PC-3 (cell line): ENCODE measurements at regions of chr17 and their contacts with region 1.

Region 1: GRCh38 chr17:49677933-49678847 is at the start of gene SPOP:
- DNase-seq: peak; percentile 100
- ATAC-seq: peak; percentile 91
- H3K4me3 ChIP-seq: peak within 1 kb of the TSS; percentile 90
- H3K27ac ChIP-seq: peak within 1 kb of the TSS; percentile 71
- H3K4me1 ChIP-seq: peaks cover 24% of the 10 kb centered on the region
- H3K27me3 ChIP-seq: no peaks in the 10 kb centered on the region
- CTCF ChIP-seq: no peak
- total RNA-seq, gene SPOP: 52.9 and 54.7 TPM in 2 replicates

Region 2: GRCh38 chr17:49414622-49415350 is 263.4 kb before region 1 on chr17 and contains the start of gene PHB1:
- CTCF ChIA-PET with region 1: no interaction called
- POLR2A ChIA-PET with region 1: interaction called, 13 read pairs
- intact Hi-C with region 1: no loop called
- DNase-seq: peak; percentile 100
- ATAC-seq: peak; percentile 99
- H3K4me3 ChIP-seq: peak within 1 kb of the TSS; percentile 89
- H3K27ac ChIP-seq: peak within 1 kb of the TSS; percentile 2; the same call in 1 of the 2 replicates
- H3K4me1 ChIP-seq: peaks cover 14% of the 10 kb centered on the region
- H3K27me3 ChIP-seq: no peaks in the 10 kb centered on the region
- CTCF ChIP-seq: no peak
- total RNA-seq, gene PHB1: 585 and 641 TPM in 2 replicates

Region 3: GRCh38 chr17:49548506-49549310 is 129.5 kb before region 1 on chr17:
- CTCF ChIA-PET with region 1: no interaction called
- POLR2A ChIA-PET with region 1: no interaction called
- intact Hi-C with region 1: no loop called
- DNase-seq: peak; percentile 62
- ATAC-seq: peak; percentile 52
- H3K4me3 ChIP-seq: no peak overlapping the region
- H3K27ac ChIP-seq: no peak overlapping the region
- H3K4me1 ChIP-seq: no peaks in the 10 kb centered on the region
- H3K27me3 ChIP-seq: no peaks in the 10 kb centered on the region
- CTCF ChIP-seq: peak; percentile 91

Region 4: DNA sequence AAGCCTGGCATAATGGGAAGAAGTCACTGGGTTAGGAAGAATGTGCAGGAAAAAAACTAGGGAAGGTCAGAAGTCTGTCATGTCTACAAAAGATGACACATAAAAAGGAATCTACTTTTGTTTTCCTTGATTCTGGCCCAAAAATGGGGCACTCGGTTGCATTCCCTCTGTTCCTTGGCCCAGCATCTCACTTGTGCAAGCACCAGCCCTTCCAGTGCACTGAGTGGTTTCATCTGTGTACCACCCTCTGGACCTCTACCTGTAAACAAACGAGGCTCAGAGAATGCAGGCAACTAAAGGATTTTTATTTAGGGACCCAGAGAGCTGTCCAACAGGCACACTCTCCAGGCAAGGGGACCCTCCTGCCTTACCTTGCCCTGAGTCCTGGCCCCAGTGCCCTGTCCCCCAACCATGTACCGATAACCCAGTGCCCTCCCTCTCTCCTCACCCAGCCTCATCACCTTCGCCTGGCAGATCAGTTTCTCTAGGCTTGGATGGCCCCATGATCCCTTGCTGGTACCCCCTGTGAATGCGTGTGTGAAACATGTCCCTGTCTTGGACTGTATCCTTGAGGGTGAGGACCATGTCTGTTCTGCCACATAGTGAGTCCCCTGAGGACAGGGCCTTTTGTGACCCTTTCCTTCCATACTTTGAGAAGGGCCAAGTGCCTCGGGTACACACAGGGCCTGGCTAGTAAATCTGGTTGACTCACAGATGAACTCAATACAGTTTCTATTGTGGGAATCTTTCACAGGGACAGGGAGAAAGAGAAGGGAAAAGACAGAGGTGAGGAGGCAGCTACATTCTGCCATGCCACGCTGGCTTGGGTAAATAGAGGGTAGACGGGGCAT is 89.2 kb before region 1 on chr17:
- CTCF ChIA-PET with region 1: no interaction called
- POLR2A ChIA-PET with region 1: interaction called, 21 read pairs
- intact Hi-C with region 1: no loop called
- DNase-seq: peak; percentile 51
- ATAC-seq: peak; percentile 65
- H3K4me3 ChIP-seq: no peak overlapping the region
- H3K27ac ChIP-seq: peak overlapping the region; percentile 18
- H3K4me1 ChIP-seq: peaks cover 14% of the 10 kb centered on the region
- H3K27me3 ChIP-seq: no peaks in the 10 kb centered on the region
- CTCF ChIP-seq: no peak

Region 5: GRCh38 chr17:49646391-49647255 is 31.6 kb before region 1 on chr17:
- CTCF ChIA-PET with region 1: no interaction called
- POLR2A ChIA-PET with region 1: interaction called, 10 read pairs
- intact Hi-C with region 1: no loop called
- DNase-seq: peak; percentile 88
- ATAC-seq: peak; percentile 99
- H3K4me3 ChIP-seq: peak overlapping the region; percentile 54
- H3K27ac ChIP-seq: peak overlapping the region; percentile 62
- H3K4me1 ChIP-seq: peaks cover 19% of the 10 kb centered on the region
- H3K27me3 ChIP-seq: no peaks in the 10 kb centered on the region
- CTCF ChIP-seq: no peak

Region 6: DNA sequence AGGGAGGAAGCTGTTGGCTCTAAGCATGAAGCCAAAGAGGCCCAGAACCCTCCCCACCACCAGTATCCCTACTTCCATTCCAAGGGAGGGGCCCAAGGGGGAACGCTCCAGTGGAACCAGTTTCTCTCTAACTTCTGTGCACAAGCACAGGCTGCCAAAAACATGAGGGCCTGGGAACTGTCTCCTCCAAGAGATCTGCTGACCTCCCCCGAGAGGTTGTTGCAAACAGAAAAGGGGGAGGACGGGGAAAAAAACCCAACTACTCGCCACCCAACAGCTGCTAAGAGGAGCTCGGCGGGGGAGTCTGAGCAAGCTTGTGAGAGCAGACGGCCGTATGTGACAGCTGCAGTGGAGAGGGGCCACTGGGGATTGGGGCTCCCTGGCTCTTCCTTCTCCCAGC is 45.2 kb after region 1 on chr17:
- CTCF ChIA-PET with region 1: no interaction called
- POLR2A ChIA-PET with region 1: no interaction called
- intact Hi-C with region 1: no loop called
- DNase-seq: no peak
- ATAC-seq: no peak
- H3K4me3 ChIP-seq: no peak overlapping the region
- H3K27ac ChIP-seq: no peak overlapping the region
- H3K4me1 ChIP-seq: no peaks in the 10 kb centered on the region
- H3K27me3 ChIP-seq: no peaks in the 10 kb centered on the region
- CTCF ChIP-seq: no peak

Region 7: GRCh38 chr17:49739641-49740271 is 61.6 kb after region 1 on chr17:
- CTCF ChIA-PET with region 1: no interaction called
- POLR2A ChIA-PET with region 1: no interaction called
- intact Hi-C with region 1: no loop called
- DNase-seq: no peak
- ATAC-seq: no peak
- H3K4me3 ChIP-seq: no peak overlapping the region
- H3K27ac ChIP-seq: no peak overlapping the region
- H3K4me1 ChIP-seq: no peaks in the 10 kb centered on the region
- H3K27me3 ChIP-seq: no peaks in the 10 kb centered on the region
- CTCF ChIP-seq: no peak

Region 8: DNA sequence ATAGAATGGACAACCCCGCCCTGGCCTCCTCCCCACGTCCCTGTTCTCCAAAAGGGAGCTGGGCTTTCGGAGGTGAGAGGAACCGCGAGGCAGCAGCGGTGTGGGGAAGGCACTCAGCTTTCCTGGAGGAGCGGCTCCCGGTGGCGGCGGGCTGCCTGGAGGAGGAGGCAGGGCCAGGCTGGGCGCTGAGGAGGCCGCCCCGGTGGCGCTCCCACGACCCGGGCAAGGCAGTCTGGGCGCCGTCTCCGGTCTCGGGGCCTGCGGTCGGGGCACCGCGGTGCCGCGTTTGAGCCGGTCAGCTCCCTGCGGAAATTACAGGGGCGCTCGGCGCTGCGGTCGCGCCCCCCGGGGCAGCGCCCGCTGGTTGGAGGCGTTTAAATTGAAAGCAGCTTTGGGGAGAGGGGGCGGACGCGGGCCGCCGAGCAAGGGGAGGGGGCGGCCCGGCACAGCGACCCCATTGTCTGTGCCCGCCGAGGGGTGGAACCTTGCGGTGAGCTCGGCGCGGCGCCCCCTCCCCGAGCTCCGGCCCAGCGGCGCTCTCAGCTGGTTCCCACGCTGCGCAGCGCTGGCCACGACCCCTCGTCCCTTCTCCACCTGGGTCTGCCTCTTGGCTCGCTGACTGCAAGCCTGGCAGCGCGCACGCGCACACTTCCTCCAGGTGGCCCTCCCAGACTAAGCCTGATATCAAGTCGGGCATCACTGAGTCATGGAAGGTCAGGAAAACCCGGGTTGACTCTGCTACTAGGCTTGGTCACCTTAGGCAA is 232.1 kb after region 1 on chr17:
- CTCF ChIA-PET with region 1: no interaction called
- POLR2A ChIA-PET with region 1: no interaction called
- intact Hi-C with region 1: no loop called
- DNase-seq: peak; percentile 79
- ATAC-seq: peak; percentile 52
- H3K4me3 ChIP-seq: no peak overlapping the region
- H3K27ac ChIP-seq: no peak overlapping the region
- H3K4me1 ChIP-seq: peaks cover 30% of the 10 kb centered on the region
- H3K27me3 ChIP-seq: no peaks in the 10 kb centered on the region
- CTCF ChIP-seq: no peak

Region 9: DNA sequence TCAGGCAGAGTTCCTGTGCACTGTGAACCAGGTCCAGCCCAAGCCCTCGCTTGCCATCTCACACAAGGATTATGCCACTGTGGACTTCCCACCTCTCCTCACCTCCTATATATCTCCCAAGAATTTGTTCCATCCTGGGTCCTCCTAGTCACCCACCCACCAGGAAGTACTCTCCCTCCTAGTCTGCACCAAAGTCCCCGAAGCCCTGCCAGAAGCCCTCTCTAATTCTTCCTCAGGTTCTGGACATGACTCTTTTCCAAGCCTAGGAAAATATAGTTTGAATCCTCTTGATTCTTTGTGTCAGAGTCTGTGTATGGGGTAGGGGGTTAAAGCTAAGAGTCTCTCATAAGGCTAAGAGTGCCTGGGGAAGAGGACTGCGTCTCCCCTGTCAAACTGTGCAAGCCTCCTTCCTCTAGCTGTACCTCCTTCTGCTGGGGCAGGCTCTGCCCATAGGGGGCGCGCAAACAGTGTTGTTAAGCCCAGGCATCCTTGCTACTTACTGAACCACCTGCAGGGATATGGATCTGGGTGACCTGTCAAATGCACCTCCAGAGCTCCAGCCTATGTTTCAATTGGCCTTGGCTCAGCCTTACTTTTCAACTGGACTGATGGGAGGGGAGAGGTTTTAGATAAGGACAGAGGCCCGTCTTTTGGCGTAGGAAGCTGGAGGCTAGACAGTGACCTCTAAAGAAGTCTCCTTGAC is 274.2 kb after region 1 on chr17:
- CTCF ChIA-PET with region 1: interaction called, 11 read pairs
- POLR2A ChIA-PET with region 1: no interaction called
- intact Hi-C with region 1: no loop called
- DNase-seq: peak; percentile 90
- ATAC-seq: peak; percentile 88
- H3K4me3 ChIP-seq: peak overlapping the region; percentile 3; the same call in 1 of the 2 replicates
- H3K27ac ChIP-seq: peak overlapping the region; percentile 8; the same call in 1 of the 2 replicates
- H3K4me1 ChIP-seq: peaks cover 28% of the 10 kb centered on the region
- H3K27me3 ChIP-seq: no peaks in the 10 kb centered on the region
- CTCF ChIP-seq: peak; percentile 100